ENCODE measurements at regions of chr15 and their contacts with region 1.

Region 1: GRCh38 chr15:69452692-69453521 is at the start of gene RPLP1:
- DNase-seq: peak; percentile 96 to 97
- H3K4me3 ChIP-seq: peak within 1 kb of the TSS; percentile 85 to 86
- H3K27ac ChIP-seq: peak within 1 kb of the TSS; percentile 89 to 91
- H3K4me1 ChIP-seq: peaks cover 0 to 38% (median 31%) of the 10 kb centered on the region in 4 donors
- H3K27me3 ChIP-seq: no peaks in the 10 kb centered on the region
- CTCF ChIP-seq: no peak

Region 2: DNA sequence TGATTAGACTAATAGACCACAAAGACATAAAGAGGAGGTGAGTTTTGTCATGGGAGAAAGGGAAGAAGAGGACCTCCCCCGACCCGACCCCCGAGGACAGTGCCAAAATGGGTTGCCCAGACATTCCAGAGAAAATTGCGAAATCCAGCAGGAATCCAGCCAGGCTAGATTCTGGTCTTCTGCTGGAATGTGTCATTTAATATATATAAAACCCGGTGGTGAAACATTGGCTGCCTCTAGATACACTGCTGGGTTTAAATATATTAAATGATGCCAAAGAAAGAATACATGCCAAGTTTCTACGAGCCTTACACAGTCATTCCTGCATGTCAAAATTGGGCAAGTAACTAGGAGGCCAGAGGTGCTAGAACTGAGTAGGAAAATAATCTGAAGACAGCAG is 567.8 kb before region 1 on chr15:
- intact Hi-C with region 1: no loop called
- DNase-seq: no peak
- H3K4me3 ChIP-seq: no peak overlapping the region
- H3K27ac ChIP-seq: no peak overlapping the region
- H3K4me1 ChIP-seq: peaks cover 0 to 16% (median 16%) of the 10 kb centered on the region in 4 donors
- H3K27me3 ChIP-seq: no peaks in the 10 kb centered on the region
- CTCF ChIP-seq: no peak

Region 3: GRCh38 chr15:69413822-69414700 is 38.8 kb before region 1 on chr15 and contains the start of gene KIF23:
- intact Hi-C with region 1: loop called (anchors 2 kb)
- DNase-seq: peak; percentile 87 to 92
- H3K4me3 ChIP-seq: peak within 1 kb of the TSS; percentile 62 to 71
- H3K27ac ChIP-seq: peak within 1 kb of the TSS; percentile 52 to 64
- H3K4me1 ChIP-seq: peaks cover 0 to 70% (median 13%) of the 10 kb centered on the region in 4 donors
- H3K27me3 ChIP-seq: no peaks in the 10 kb centered on the region
- CTCF ChIP-seq: no peak